Activated T-helper 1 cell treated with anti-CD3 and anti-CD28 coated beads, Interleukin-12 subunit alpha, Interleukin-12 subunit beta, Interleukin-2, Interleukin-4 antibody, amounts not matched to agents 30 ng/mL and 10 ng/mL and 1 ng/mL, durations not matched to agents 14 hours and 24 hours and 36 hours (primary cell): ENCODE measurements at regions of chr9 and their contacts with region 1.

Region 1: DNA sequence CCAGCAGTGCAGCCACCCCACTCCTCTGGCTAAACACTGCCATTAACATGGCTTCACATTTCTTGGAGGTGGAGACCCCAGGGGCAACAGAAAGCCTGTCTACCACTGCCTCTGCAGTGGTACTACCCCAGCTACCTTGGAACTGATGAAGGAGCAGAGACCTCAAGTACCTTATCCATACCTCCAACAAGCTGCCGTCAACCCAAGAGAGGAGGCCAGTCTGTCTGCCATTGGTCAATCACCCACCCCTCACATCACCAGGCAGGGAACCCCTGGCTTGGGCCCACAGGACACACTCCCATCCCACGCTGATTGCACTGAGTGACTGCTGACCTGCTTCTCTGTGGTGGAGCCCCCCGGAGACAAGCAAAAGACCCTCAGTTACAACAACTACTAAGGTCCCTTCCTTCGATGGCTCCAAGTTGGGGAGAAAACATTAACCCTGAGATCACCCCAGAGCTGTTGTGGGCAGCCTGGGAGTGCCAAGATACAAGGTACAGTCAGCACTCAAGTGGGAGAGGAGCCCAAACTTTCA is 5.6 kb downstream of the IFNA14 start:
- DNase-seq: no peak
- H3K4me3 Mint-ChIP-seq: no peak overlapping the region
- H3K27ac Mint-ChIP-seq: no peak overlapping the region
- H3K4me1 Mint-ChIP-seq: no peaks in the 10 kb centered on the region
- H3K27me3 Mint-ChIP-seq: peaks cover 16% of the 10 kb centered on the region

Region 2: DNA sequence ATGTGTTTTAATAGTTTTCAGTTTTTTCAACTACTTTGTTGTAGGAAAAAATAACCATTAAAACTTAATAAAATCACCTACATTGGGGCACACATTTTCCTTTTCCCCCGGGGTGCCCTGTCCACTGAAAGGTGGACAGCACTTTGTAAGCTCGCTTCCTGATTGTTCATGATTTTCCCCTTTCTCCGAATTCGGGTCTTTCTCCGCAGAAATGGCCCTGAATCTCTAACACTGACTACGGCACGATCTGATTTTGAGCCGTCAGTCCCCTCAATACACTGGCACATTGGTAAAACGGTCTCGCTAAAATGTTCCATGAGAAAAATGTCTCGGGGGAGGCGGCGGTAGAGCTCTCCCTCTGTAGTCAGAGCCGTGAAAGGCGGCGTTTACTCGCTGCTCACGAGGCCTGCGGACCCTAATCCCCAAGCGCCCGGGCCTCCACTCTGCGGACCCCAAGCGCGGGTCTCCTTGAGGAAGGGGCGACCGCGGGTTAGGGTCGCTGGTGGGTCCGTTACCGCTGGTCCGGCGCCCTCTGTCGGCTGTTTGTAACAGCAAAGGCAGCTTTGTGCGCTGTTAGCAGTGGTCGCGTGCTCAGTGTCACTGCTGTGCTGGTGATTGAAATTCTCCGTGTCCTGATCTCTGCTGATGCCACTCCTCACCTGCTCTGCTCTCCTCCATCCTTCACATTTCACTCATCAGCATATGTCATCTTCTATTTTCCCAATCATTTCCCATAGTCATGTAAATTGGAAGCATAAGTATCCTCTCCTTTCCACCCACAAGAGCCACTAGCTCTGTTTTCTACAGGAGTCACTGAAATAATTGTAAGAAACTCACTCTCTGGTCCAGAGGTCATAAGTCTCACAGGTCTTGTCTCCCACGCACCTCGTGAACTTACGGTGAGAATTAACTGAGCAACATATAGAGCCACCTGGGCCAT is 161.8 kb after region 1 on chr9:
- intact Hi-C with region 1: loop called (anchors 2 kb)
- DNase-seq: peak; percentile 28
- H3K4me3 Mint-ChIP-seq: peak overlapping the region; percentile 78
- H3K27ac Mint-ChIP-seq: no peak overlapping the region
- H3K4me1 Mint-ChIP-seq: peaks cover 10% of the 10 kb centered on the region
- H3K27me3 Mint-ChIP-seq: peaks cover 64% of the 10 kb centered on the region

Region 3: GRCh38 chr9:21455320-21455719 is 221.1 kb after region 1 on chr9:
- intact Hi-C with region 1: loop called (anchors 2 kb)
- DNase-seq: no peak
- H3K4me3 Mint-ChIP-seq: no peak overlapping the region
- H3K27ac Mint-ChIP-seq: no peak overlapping the region
- H3K4me1 Mint-ChIP-seq: no peaks in the 10 kb centered on the region
- H3K27me3 Mint-ChIP-seq: peaks cover 28% of the 10 kb centered on the region